WTC11 (cell line): ENCODE measurements at regions of chr16 and their contacts with region 1.

Region 1: DNA sequence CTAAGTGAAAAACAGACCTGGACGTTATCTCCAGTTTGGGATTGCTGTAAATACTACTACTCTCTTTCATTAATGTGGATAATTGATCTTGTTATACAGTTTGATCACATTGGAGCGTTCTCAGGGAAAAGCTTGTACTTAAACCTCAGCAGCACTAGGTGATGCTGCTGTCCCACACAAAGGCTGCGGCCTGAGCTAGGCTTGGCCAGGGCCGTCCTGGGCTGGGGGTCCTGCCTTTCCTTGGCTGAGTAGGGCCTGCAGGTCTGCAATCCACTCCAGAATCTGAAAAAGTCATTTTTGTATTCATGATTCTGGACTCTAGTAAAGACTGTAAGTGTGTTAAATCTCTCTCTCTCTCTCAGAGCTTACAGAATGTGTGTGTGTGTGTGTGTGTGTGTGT is 23.7 kb upstream of the PMFBP1 start:
- DNase-seq: peak; percentile 59
- ATAC-seq: peak; percentile 90
- H3K4me3 Mint-ChIP-seq: no peak overlapping the region
- H3K27ac Mint-ChIP-seq: no peak overlapping the region
- H3K4me1 Mint-ChIP-seq: peaks cover 31% of the 10 kb centered on the region
- H3K27me3 Mint-ChIP-seq: no peaks in the 10 kb centered on the region
- CTCF ChIP-seq: no peak

Region 2: DNA sequence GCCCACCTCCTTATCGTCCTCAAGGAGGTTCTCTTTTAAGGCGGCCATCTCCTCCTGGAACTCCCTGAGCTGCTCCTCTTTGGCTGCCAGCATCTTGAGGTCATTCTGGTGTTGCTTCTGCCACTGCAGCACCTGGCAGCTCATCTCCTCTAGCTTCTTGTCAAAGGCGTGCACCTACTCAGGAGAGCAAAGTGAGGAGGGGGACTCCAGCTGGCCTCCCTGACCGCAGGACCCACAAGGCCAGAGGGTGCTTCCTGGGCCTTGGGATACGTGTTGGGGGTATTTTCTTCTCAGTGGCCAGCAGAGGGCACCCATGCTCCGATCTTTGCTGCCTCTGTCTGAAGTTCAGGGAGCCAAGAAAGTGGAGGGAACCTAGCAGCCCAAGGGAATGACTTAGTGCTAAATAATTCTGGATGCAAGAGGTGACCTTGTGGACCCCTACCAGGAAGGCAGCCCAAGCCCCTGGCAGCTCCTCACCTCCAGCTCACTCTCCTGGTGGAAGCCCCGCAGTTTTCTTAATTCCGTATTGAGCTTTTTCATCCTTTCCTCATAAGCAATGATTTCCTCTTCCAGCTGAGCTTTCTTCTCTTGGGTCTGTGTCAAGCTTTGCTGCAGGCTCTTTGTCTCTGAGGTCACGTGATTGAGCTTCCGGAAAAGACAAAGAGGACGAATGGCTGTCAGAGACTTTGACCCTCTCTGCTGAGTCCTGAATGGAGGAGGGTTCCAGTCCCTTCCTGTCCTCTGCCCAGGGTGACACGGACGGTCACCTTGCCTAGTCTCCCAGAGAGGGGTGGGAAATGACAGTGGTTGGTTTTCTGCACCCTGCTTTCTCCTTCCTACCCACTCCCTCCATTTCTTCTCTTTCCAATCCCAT is 70.6 kb before region 1 on chr16:
- CTCF ChIA-PET with region 1: interaction called, 17 read pairs
- POLR2A ChIA-PET with region 1: no interaction called
- DNase-seq: peak; percentile 80
- ATAC-seq: peak; percentile 90
- H3K4me3 Mint-ChIP-seq: no peak overlapping the region
- H3K27ac Mint-ChIP-seq: 0 out of 2 replicates have a peak overlapping the region, but pooled peaks have one; percentile 8
- H3K4me1 Mint-ChIP-seq: peaks cover 19% of the 10 kb centered on the region
- H3K27me3 Mint-ChIP-seq: no peaks in the 10 kb centered on the region; the same call in 1 of the 2 replicates
- CTCF ChIP-seq: peak; percentile 80

Region 3: GRCh38 chr16:72221630-72222024 is 26.0 kb after region 1 on chr16:
- CTCF ChIA-PET with region 1: interaction called, 10 read pairs
- POLR2A ChIA-PET with region 1: no interaction called
- DNase-seq: no peak
- ATAC-seq: no peak
- H3K4me3 Mint-ChIP-seq: no peak overlapping the region
- H3K27ac Mint-ChIP-seq: no peak overlapping the region
- H3K4me1 Mint-ChIP-seq: no peaks in the 10 kb centered on the region
- H3K27me3 Mint-ChIP-seq: no peaks in the 10 kb centered on the region
- CTCF ChIP-seq: no peak

Region 4: GRCh38 chr16:72371307-72372086 is 175.9 kb after region 1 on chr16:
- CTCF ChIA-PET with region 1: interaction called, 12 read pairs
- POLR2A ChIA-PET with region 1: no interaction called
- DNase-seq: peak; percentile 44
- ATAC-seq: peak; percentile 95
- H3K4me3 Mint-ChIP-seq: no peak overlapping the region
- H3K27ac Mint-ChIP-seq: peak overlapping the region; percentile 75
- H3K4me1 Mint-ChIP-seq: peaks cover 45% of the 10 kb centered on the region
- H3K27me3 Mint-ChIP-seq: no peaks in the 10 kb centered on the region
- CTCF ChIP-seq: no peak

Region 5: DNA sequence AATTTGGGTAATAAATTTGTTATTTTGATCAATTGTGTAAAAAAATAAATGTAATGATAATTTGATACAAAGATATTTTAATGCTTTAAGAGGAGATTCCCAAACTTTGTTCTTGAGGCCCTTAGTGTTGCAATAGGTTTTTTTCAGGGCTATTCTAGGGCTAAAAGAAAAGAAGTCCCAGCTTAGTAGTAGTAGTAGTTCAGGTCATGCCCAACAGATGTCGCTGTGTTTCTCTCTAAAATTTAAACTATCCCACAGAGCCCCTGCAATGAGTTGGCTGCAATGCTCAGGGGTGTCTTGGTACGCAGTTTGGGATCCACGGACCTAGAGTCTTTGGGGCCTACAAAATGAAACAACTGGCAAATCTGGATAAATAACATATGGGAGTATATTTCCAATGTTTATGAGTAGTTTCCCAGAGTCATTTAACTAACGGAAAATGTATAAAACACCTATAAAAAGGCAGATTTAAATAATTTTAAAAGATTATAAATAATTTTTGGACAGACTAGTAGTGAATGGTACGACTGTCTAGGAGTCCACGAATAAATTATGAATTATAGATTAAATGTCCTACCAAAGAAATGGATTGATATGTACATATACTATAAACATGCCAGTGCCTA is 204.8 kb after region 1 on chr16:
- CTCF ChIA-PET with region 1: interaction called, 10 read pairs
- POLR2A ChIA-PET with region 1: no interaction called
- DNase-seq: peak; percentile 60
- ATAC-seq: peak; percentile 97
- H3K4me3 Mint-ChIP-seq: no peak overlapping the region
- H3K27ac Mint-ChIP-seq: peak overlapping the region; percentile 59; the same call in 1 of the 2 replicates
- H3K4me1 Mint-ChIP-seq: peaks cover 6% of the 10 kb centered on the region; the same call in 1 of the 2 replicates
- H3K27me3 Mint-ChIP-seq: no peaks in the 10 kb centered on the region
- CTCF ChIP-seq: peak; percentile 61

Region 6: GRCh38 chr16:72467157-72467759 is 271.6 kb after region 1 on chr16:
- CTCF ChIA-PET with region 1: interaction called, 43 read pairs
- POLR2A ChIA-PET with region 1: interaction called, 3 read pairs
- DNase-seq: no peak
- ATAC-seq: peak; percentile 92
- H3K4me3 Mint-ChIP-seq: no peak overlapping the region
- H3K27ac Mint-ChIP-seq: no peak overlapping the region
- H3K4me1 Mint-ChIP-seq: no peaks in the 10 kb centered on the region
- H3K27me3 Mint-ChIP-seq: no peaks in the 10 kb centered on the region
- CTCF ChIP-seq: no peak